Breast epithelium (tissue), 4 donors: ENCODE measurements at regions of chr15 and their contacts with region 1.

Region 1: DNA sequence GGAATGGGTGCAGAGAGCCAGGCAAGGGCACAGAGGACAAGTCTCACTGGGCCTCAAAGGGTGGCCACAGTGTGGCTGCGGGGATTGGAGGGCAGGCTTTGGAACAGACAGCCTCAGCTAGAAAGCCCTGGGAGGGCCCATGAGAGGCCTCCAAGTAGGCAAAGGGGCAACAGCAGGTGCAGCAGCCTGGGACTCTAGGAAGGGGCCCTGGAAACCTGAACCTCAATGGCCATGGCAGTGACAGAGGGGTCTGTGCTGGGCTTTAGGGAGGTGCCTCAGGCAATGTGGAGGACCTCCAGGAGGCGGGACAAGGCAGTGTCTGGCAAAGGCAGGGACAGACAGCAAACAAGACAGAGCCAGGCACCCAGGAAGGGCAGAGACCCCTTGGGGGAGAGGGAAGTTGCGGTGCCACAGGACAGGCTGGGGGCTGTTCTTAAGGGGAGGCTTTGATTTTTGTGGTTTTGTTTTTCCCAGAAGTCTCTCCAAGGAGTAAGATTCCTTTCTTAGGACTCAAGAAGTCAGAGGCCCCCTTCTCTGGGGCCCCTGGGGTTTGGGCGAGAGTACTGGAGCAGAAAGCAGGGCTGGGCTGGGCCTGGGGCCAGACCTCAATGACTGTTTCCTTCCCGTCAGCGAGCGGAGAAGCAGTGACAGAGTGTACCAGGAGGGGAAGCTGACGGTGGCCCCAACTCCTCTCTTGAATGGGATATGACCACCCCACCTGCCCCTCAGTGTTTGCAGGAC is 9.7 kb downstream of the STOML1 start:
- DNase-seq: peak in 1 of 2 donors; percentile 77
- H3K4me3 ChIP-seq: peak overlapping the region in 1 of 3 donors; percentile 51
- H3K27ac ChIP-seq: peak overlapping the region; percentile 88 to 98
- H3K4me1 ChIP-seq: peaks cover 24 to 31% of the 10 kb centered on the region in 2 donors
- H3K27me3 ChIP-seq: no peaks in the 10 kb centered on the region
- CTCF ChIP-seq: no peak
- POLR2A ChIP-seq: no peak

Region 2: DNA sequence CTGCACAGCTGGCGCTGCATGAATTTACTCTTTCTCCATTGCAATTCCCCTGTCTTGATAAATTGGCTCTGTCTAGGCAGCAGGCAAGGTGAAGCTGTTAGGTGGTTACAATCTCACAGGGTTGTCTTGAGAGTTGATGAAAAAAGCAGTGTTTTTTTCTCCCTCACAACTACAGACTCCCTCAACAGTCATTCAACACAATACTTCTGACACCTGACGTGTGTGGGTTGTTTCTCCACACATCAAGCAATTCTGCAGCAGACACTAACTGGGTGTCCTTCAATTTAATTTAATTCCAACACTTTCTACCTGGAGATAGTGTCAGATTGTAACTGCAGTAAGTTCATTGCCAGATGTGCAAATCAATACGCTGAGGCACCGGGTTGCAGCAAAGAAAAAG is 895.9 kb after region 1 on chr15:
- intact Hi-C with region 1: loop called (anchors 5 kb)
- DNase-seq: no peak
- H3K4me3 ChIP-seq: no peak overlapping the region
- H3K27ac ChIP-seq: no peak overlapping the region
- H3K4me1 ChIP-seq: no peaks in the 10 kb centered on the region
- H3K27me3 ChIP-seq: no peaks in the 10 kb centered on the region
- CTCF ChIP-seq: no peak
- POLR2A ChIP-seq: no peak

Region 3: DNA sequence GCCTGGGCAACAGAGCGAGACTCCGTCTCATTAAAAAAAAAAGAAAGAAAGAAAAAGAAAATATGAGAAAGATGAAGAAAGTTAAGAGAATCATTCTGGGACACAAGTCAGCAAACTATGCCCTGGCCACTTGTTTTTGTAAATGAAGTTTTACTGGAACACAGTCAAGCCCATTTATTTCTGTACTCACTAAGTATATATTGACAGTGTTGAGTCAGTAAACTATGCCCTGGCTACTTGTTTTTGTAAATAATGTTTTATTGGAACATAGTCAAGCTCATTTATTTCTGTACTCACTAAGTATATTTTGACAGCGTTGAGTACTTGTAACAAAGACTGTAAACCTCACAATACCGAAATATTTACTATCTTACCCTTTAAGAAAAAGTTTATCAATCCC is 1511.3 kb after region 1 on chr15:
- intact Hi-C with region 1: no loop called
- DNase-seq: no peak
- H3K4me3 ChIP-seq: no peak overlapping the region
- H3K27ac ChIP-seq: peak overlapping the region in 1 of 2 donors; percentile 38
- H3K4me1 ChIP-seq: no peaks in the 10 kb centered on the region
- H3K27me3 ChIP-seq: no peaks in the 10 kb centered on the region
- CTCF ChIP-seq: no peak
- POLR2A ChIP-seq: no peak